ENCODE measurements at regions of chr22 and their contacts with region 1.

Region 1: GRCh38 chr22:40024201-40025061 is 29.7 kb downstream of the FAM83F start:
- DNase-seq: peak; percentile 79
- ATAC-seq: peak; percentile 94

Region 2: GRCh38 chr22:39534591-39535356 is 489.7 kb before region 1 on chr22:
- intact Hi-C with region 1: loop called (anchors 5 kb)
- DNase-seq: peak; percentile 92
- ATAC-seq: peak; percentile 47

Region 3: GRCh38 chr22:39932918-39933649 is 91.3 kb before region 1 on chr22:
- intact Hi-C with region 1: loop called (anchors 5 kb)
- DNase-seq: no peak
- ATAC-seq: no peak

Region 4: GRCh38 chr22:40193429-40194421 is 169.3 kb after region 1 on chr22:
- intact Hi-C with region 1: no loop called
- DNase-seq: no peak
- ATAC-seq: peak; percentile 33

Region 5: DNA sequence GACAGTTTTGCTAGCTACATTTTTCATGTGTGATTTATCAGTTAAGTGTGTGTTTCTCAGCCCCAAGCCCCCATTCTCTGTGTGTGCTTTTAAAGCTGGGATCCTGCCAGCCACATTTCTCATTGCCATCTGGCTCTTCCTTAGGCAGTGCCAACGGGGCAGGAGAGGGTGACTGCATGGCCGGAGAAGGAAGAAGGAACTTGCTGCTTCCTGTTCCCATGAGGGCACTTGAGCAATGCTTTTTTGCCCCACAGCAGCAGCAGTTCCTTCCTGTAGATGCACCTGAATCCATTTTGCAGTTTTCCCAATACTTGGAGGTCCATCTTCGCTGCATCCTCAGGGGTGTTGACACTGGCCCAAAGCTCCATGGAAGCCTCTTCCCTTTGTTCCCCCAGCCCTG is 190.8 kb after region 1 on chr22:
- intact Hi-C with region 1: no loop called
- DNase-seq: peak; percentile 56
- ATAC-seq: peak; percentile 56